Stomach (tissue), 19 donors: ENCODE measurements at regions of chr1 and their contacts with region 1.

Region 1: DNA sequence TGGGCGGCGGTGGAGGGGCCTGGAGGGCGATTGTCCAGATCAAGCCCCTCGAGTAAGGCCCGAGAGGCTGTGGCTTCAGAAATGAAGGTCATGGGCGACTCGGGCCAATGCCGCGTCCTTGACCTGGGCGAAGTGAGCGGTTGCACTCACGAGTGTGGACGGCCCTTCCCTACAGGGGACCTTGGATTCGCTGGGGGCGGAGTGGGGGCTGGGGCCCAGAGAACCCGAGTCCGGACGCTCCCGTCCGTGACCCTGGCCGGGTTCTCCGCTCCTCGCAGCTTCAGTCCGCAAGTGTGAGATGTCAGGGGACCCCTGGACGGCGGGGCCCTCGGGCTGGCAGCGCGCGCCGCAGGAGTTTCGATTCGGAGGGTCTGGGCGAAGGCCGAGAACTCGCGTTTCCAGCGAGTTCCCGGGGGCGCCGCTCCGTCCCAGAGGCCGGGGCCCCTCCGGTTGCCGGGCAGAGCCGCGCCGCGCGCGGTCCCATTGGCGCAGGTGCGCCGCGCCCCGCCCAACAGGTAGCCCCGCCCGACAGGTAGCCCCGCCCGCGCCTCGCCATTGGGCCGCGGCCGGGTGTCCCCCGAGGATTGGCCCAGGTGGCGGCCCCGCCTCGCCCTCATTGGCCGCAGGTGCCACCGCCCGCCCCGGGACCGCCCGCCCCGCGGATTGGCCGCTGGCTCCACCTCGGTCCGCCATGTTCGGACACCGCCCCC is at the start of gene PRKCZ:
- DNase-seq: peak; percentile 97
- H3K4me3 ChIP-seq: peak within 1 kb of the TSS; percentile 62 to 76 (median 70)
- H3K27ac ChIP-seq: peak within 1 kb of the TSS; percentile 81 to 90 (median 86)
- H3K4me1 ChIP-seq: peaks cover 5 to 69% (median 52%) of the 10 kb centered on the region in 4 donors
- H3K27me3 ChIP-seq: peaks cover 5 to 70% (median 23%) of the 10 kb centered on the region in 3 donors
- CTCF ChIP-seq: no peak
- EP300 ChIP-seq: no peak
- POLR2A ChIP-seq: no peak
- total RNA-seq, gene PRKCZ: 11.1 to 55.8 (median 21.3) TPM

Region 2: GRCh38 chr1:1946540-1946939 is 103.3 kb before region 1 on chr1:
- intact Hi-C with region 1: loop called (anchors 5 kb)
- DNase-seq: peak; percentile 68 to 82
- H3K4me3 ChIP-seq: no peak overlapping the region
- H3K27ac ChIP-seq: no peak overlapping the region
- H3K4me1 ChIP-seq: peaks cover 8 to 24% (median 21%) of the 10 kb centered on the region in 4 donors
- H3K27me3 ChIP-seq: peaks cover 0 to 31% (median 12%) of the 10 kb centered on the region in 3 donors
- CTCF ChIP-seq: no peak
- EP300 ChIP-seq: no peak
- POLR2A ChIP-seq: no peak

Region 3: GRCh38 chr1:1958071-1958541 is 91.8 kb before region 1 on chr1:
- intact Hi-C with region 1: no loop called
- DNase-seq: no peak
- H3K4me3 ChIP-seq: no peak overlapping the region
- H3K27ac ChIP-seq: no peak overlapping the region
- H3K4me1 ChIP-seq: peaks cover 0 to 11% (median 9%) of the 10 kb centered on the region in 4 donors
- H3K27me3 ChIP-seq: peaks cover 0 to 63% (median 18%) of the 10 kb centered on the region in 3 donors
- CTCF ChIP-seq: no peak
- EP300 ChIP-seq: no peak
- POLR2A ChIP-seq: no peak